Tibial artery (tissue), 4 donors: ENCODE measurements at regions of chr3 and their contacts with region 1.

Region 1: GRCh38 chr3:70358978-70359580 is 46.6 kb upstream of the MDFIC2 start:
- DNase-seq: no peak
- H3K4me3 ChIP-seq: no peak overlapping the region
- H3K27ac ChIP-seq: no peak overlapping the region
- H3K4me1 ChIP-seq: peaks cover 0 to 15% (median 0%) of the 10 kb centered on the region in 4 donors
- H3K27me3 ChIP-seq: no peaks in the 10 kb centered on the region
- CTCF ChIP-seq: peak; percentile 75 to 82

Region 2: DNA sequence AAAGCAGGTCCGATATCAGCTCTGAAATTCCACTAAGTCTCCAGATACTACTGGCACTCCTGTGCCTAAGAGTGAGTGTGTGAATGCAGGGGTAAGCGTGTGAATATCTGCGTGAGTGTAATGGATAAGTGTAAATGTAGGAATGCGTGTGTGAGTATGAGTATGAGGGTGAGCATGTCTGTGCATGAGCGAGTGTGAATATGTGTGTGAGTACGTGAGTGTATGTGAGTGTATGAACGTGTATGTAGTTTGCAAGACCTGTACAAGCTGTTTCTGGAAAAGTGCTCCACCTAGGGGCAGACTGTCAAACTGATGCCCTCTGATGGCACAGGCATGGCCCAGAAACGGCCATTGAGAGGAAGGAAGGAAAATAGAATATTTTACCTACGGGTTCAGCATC is 948.8 kb before region 1 on chr3:
- intact Hi-C with region 1: no loop called
- DNase-seq: peak; percentile 75 to 78
- H3K4me3 ChIP-seq: no peak overlapping the region
- H3K27ac ChIP-seq: no peak overlapping the region
- H3K4me1 ChIP-seq: no peaks in the 10 kb centered on the region
- H3K27me3 ChIP-seq: no peaks in the 10 kb centered on the region
- CTCF ChIP-seq: peak; percentile 77 to 79

Region 3: DNA sequence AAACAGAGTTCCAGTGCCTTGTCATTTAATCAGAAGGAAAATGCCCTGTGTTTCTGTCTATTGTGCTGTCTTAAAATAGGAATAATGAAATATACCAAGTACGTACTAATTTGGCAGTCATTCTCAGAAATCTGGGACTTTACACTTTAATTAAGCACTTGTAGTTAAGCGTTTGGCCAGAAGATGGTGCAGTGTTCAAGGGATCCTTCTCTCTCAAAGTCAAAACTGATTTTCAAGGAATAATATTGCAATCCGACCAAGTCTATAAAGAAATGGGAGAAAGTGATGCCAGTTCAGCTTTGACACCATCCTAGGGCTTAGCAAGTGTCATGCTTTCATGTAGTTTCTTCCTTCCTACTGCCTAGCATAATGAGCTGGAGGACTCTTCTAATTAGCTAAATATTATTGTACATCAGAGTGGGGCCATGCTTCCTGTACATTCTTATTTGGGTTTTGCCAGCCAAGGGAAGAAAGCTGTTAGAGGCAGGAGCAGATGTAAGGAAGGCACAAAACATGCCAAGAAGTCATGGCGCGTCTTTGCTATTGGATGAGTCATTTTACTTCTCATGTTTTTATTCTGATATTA is 294.8 kb before region 1 on chr3:
- intact Hi-C with region 1: loop called (anchors 10 kb)
- DNase-seq: no peak
- H3K4me3 ChIP-seq: no peak overlapping the region
- H3K27ac ChIP-seq: peak overlapping the region; percentile 41 to 84
- H3K4me1 ChIP-seq: peaks cover 0 to 52% (median 20%) of the 10 kb centered on the region in 4 donors
- H3K27me3 ChIP-seq: no peaks in the 10 kb centered on the region
- CTCF ChIP-seq: peak; percentile 79 to 91

Region 4: GRCh38 chr3:70250492-70250891 is 108.6 kb before region 1 on chr3:
- intact Hi-C with region 1: no loop called
- DNase-seq: no peak
- H3K4me3 ChIP-seq: no peak overlapping the region
- H3K27ac ChIP-seq: peak overlapping the region; percentile 57
- H3K4me1 ChIP-seq: peaks cover 0 to 36% (median 0%) of the 10 kb centered on the region in 4 donors
- H3K27me3 ChIP-seq: no peaks in the 10 kb centered on the region
- CTCF ChIP-seq: no peak

Region 5: DNA sequence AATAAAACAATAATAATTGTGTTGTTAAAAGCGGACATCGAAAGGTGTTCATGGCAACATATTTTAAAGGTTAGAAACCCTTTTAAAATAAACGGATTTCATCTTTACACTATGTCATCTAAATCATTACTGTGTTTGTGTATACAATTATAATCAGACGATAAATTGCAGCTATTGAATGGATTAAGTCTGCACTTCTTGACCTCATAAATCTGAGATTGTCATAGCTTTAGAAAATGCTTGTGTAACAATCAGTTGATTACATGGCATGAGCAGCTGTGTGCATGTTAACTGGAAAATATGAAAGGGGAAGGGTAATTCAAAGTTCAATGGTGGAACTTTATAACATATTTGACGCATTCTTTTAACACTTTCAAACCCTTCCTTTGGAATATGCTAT is 105.8 kb after region 1 on chr3:
- intact Hi-C with region 1: no loop called
- DNase-seq: no peak
- H3K4me3 ChIP-seq: no peak overlapping the region
- H3K27ac ChIP-seq: no peak overlapping the region
- H3K4me1 ChIP-seq: no peaks in the 10 kb centered on the region
- H3K27me3 ChIP-seq: no peaks in the 10 kb centered on the region
- CTCF ChIP-seq: no peak